Activated CD8-positive, alpha-beta memory T cell treated with anti-CD3 and anti-CD28 coated beads, Interleukin-2, amount 10 ng/mL, durations not matched to agents 7 days and 5 days (primary cell): ENCODE measurements at regions of chr6 and their contacts with region 1.

Region 1: GRCh38 chr6:110389689-110390382 is 25.5 kb downstream of the DDO start:
- DNase-seq: no peak
- ATAC-seq: no peak
- H3K4me3 Mint-ChIP-seq: no peak overlapping the region
- H3K27ac Mint-ChIP-seq: peak overlapping the region; percentile 8
- H3K4me1 Mint-ChIP-seq: peaks cover 16% of the 10 kb centered on the region
- H3K27me3 Mint-ChIP-seq: peaks cover 5% of the 10 kb centered on the region

Region 2: GRCh38 chr6:110179401-110180227 is 210.2 kb before region 1 on chr6 and contains the start of gene WASF1:
- CTCF ChIA-PET with region 1: interaction called, 21 read pairs
- DNase-seq: peak; percentile 94
- ATAC-seq: peak; percentile 92
- H3K4me3 Mint-ChIP-seq: no peak within 1 kb of the TSS
- H3K27ac Mint-ChIP-seq: peak within 1 kb of the TSS; percentile 61
- H3K4me1 Mint-ChIP-seq: peaks cover 7% of the 10 kb centered on the region
- H3K27me3 Mint-ChIP-seq: peaks cover 19% of the 10 kb centered on the region
- total RNA-seq, gene WASF1: 0.47 to 1.5 TPM

Region 3: GRCh38 chr6:110408891-110409290 is 19.1 kb after region 1 on chr6:
- CTCF ChIA-PET with region 1: no interaction called
- DNase-seq: no peak
- ATAC-seq: no peak
- H3K4me3 Mint-ChIP-seq: no peak overlapping the region
- H3K27ac Mint-ChIP-seq: no peak overlapping the region
- H3K4me1 Mint-ChIP-seq: no peaks in the 10 kb centered on the region
- H3K27me3 Mint-ChIP-seq: peaks cover 6% of the 10 kb centered on the region